A673 (cell line): ENCODE measurements at regions of chr10 and their contacts with region 1.

Region 1: GRCh38 chr10:119290291-119291048 is 83.1 kb downstream of the GRK5 start:
- DNase-seq: no peak
- H3K4me3 ChIP-seq: no peak overlapping the region
- H3K27ac ChIP-seq: no peak overlapping the region
- H3K4me1 ChIP-seq: peaks cover 36% of the 10 kb centered on the region
- H3K27me3 ChIP-seq: no peaks in the 10 kb centered on the region
- CTCF ChIP-seq: peak; percentile 31

Region 2: GRCh38 chr10:119270762-119271366 is 19.6 kb before region 1 on chr10:
- CTCF ChIA-PET with region 1: interaction called, 10 read pairs
- POLR2A ChIA-PET with region 1: no interaction called
- intact Hi-C with region 1: no loop called
- DNase-seq: no peak
- H3K4me3 ChIP-seq: no peak overlapping the region
- H3K27ac ChIP-seq: no peak overlapping the region
- H3K4me1 ChIP-seq: peaks cover 33% of the 10 kb centered on the region
- H3K27me3 ChIP-seq: no peaks in the 10 kb centered on the region
- CTCF ChIP-seq: no peak